A549 (cell line): ENCODE measurements at regions of chr3 and their contacts with region 1.

Region 1: GRCh38 chr3:101849051-101849720 is at the start of gene NFKBIZ:
- DNase-seq: peak; percentile 91 to 92
- ATAC-seq: peak; percentile 90 to 92
- H3K4me3 ChIP-seq: peak within 1 kb of the TSS; percentile 84
- H3K27ac ChIP-seq: peak within 1 kb of the TSS; percentile 96 to 98
- H3K4me1 ChIP-seq: peaks cover 40% of the 10 kb centered on the region
- CTCF ChIP-seq: no peak
- EP300 ChIP-seq: no peak; a peak in 1 of 5 replicates
- POLR2A ChIP-seq: peak; percentile 99
- RAD21 ChIP-seq: no peak
- polyA plus RNA-seq, gene NFKBIZ: 32.9 and 36.1 TPM in 2 replicates

Region 2: DNA sequence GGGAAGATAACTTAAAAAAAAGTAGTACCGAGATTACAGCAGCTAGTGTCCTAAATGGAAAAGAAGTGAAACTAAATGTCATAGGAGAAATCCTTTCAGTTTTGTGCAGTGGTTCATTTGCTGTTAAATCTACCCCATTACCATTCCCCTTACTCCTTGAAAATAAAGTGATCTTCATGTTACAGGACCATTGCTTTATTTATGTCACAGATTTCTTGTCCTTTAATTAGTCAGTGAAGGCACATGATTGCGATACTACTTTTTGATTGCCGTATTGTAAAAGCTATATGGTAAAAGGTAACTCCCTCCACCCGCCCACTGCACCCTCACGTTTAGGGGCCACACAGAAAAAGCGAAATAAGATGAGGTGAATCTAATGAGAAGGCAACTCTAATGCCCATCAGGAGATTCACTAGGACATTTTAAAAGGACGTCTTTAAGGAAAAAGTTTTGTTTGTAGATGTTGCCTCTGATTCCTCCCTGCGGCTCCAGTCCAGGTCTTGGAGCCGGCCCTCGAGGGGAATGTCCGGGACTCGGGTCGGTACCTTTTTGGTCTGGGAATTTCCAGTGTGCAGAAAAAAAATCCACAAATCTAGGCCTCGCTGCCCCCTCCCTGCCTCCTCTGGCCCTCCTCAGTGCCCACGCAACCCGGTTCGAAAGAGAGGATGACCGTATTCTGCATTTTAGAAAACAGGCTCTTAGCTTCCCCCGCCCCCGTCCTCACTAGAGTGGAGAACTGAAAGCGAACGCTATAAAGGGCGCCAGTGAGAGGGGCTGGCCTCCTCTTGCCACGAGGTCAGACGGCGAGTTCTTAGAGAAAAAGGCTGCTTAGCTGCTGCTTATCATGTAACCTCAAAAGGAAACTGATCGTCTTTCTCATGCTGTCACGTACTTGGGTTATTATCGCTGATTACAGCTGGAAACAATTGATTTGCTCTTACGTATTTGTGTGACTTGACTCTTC is 21.7 kb before region 1 on chr3:
- CTCF ChIA-PET with region 1: interaction called, 4 read pairs
- POLR2A ChIA-PET with region 1: interaction called, 37 read pairs
- DNase-seq: peak in 1 of 2 experiments; percentile 67
- ATAC-seq: peak; percentile 89 to 92
- H3K4me3 ChIP-seq: peak overlapping the region; percentile 61
- H3K27ac ChIP-seq: peak overlapping the region; percentile 88 to 94
- H3K4me1 ChIP-seq: peaks cover 40% of the 10 kb centered on the region
- CTCF ChIP-seq: no peak
- EP300 ChIP-seq: no peak
- POLR2A ChIP-seq: no peak
- RAD21 ChIP-seq: peak in 1 of 2 experiments; percentile 17; a peak in 2 of 5 replicates

Region 3: DNA sequence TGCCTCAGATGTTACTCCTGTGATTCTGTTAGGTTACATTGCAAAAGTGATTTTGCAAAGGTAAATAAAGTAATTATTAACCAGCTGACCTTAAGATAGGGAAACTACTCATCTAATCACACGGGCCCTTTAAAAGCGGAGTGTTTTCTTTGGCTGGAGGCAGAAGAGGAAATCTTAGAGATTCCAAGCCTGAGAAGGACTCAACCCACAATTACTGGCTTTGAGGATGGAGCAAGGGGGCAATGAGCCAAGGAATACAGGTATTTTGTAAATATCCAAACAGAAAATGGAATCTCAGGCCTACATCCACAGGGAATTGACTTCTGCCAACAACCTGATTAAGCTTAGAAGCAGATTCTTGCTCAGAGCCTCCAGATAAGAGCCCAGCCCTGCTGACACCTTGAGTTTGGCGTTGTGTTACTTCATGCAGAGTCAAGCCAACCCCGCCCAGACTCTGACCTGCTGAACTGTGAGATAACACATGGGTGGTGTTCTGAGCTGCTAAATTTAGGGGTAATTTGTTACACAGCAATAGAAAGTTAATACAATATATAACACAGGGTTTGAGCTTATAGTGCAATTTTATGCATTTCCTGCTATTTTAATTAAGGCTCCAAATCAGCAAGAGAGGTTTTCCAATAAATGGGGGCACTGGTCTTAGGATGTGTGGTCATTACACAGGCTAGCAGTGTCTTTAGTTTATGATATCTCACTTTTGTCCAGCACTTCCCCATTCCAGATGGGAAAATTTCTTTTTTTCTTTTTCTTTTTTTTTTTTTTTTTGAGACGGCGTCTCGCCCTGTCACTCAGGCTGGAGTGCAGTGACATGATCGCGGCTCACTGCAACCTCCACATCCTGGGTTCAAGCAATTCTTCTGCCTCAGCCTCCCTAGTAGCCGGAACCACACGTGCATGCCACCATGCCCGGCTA is 19.6 kb after region 1 on chr3:
- CTCF ChIA-PET with region 1: interaction called, 3 read pairs
- POLR2A ChIA-PET with region 1: interaction called, 14 read pairs
- DNase-seq: peak in 1 of 2 experiments; percentile 83
- ATAC-seq: peak; percentile 66 to 71
- H3K4me3 ChIP-seq: no peak overlapping the region
- H3K27ac ChIP-seq: peak overlapping the region; percentile 71 to 81
- H3K4me1 ChIP-seq: peaks cover 52% of the 10 kb centered on the region
- CTCF ChIP-seq: no peak
- EP300 ChIP-seq: peak; percentile 71 to 81; a peak in 3 of 5 replicates
- POLR2A ChIP-seq: no peak
- RAD21 ChIP-seq: peak in 1 of 2 experiments; percentile 48; a peak in 3 of 5 replicates

Region 4: DNA sequence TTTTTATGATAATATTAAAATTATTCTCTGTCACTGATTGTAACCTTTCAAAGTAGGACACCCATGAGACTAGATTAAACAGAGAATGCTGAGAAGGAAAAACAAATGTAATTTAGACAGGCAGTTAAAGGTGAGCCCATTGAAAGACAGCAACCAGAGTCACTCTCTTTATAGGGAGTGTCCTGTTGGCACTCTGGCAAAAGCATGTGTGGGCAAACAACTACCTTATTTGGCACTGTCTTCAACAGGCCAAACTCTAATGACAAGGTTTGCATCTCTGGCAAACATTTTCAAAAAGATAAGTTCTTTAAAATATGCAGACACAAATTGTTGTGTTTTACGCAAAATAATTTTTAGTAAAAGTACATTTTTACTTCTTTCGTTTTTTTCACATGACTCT is 29.9 kb after region 1 on chr3:
- CTCF ChIA-PET with region 1: no interaction called
- POLR2A ChIA-PET with region 1: no interaction called
- DNase-seq: no peak
- ATAC-seq: no peak
- H3K4me3 ChIP-seq: no peak overlapping the region
- H3K27ac ChIP-seq: no peak overlapping the region
- H3K4me1 ChIP-seq: no peaks in the 10 kb centered on the region
- CTCF ChIP-seq: no peak
- EP300 ChIP-seq: no peak
- POLR2A ChIP-seq: no peak
- RAD21 ChIP-seq: no peak

Region 5: DNA sequence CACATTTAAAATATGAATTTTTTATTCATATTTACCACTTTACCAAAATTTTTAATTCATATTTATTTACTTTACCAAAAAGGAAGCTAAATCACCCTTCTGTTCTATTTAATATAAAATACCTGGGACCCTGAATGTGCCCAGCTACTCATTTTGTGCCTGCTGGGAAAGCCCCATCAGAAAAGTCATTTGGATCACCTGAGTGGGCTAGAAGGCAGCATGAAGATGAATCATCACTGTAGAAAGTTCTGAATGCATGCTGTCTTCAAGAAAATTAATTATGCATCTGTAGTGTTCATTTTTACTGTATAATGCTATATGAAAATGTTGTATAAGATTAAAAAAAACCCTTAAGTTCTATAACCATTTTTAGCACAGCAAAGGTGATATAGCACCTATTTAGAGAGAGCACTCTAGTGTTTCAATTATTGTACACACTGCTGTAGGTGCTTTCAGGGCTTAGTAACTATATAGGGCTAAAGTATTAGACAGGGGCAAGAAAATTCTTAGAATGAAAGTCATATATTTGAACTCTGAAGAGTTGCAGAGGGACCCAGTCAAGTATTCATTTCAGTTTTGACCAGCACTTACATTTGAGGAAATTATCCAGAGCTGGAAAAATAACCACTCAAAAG is 175.2 kb after region 1 on chr3:
- CTCF ChIA-PET with region 1: no interaction called
- POLR2A ChIA-PET with region 1: no interaction called
- DNase-seq: no peak
- ATAC-seq: no peak
- H3K4me3 ChIP-seq: no peak overlapping the region
- H3K27ac ChIP-seq: no peak overlapping the region
- H3K4me1 ChIP-seq: no peaks in the 10 kb centered on the region
- CTCF ChIP-seq: no peak
- EP300 ChIP-seq: no peak
- POLR2A ChIP-seq: no peak
- RAD21 ChIP-seq: no peak

Region 6: DNA sequence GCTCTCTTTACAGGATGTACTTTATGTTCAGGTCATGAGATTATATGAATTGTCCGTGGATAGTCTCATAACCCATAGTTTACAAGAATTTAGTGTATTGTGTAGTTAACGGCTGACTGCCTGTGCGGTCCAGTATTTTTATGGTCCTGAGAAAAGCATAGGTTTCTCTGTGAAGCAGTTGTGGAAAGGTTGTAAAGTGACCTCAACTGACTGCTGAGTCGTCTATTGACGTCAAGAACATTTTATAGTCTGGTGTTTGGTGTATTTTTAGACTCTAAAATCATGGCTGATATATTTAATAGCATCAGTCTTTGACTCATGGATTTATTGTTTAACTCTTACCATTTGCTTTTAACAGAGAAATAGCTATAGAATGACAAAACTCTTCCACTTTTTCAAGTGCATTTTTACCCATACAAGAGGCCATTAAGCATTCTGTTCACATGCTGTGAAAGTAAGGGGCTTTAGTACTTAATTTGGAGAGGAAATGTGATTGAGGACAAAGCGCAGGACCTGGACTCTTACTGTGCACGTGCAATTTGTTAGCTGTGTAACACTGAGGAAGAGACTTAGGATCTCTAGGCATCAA is 240.8 kb after region 1 on chr3:
- CTCF ChIA-PET with region 1: no interaction called
- POLR2A ChIA-PET with region 1: interaction called, 12 read pairs
- DNase-seq: peak; percentile 20 to 91
- ATAC-seq: peak; percentile 89 to 92
- H3K4me3 ChIP-seq: no peak overlapping the region
- H3K27ac ChIP-seq: peak overlapping the region; percentile 82 to 86
- H3K4me1 ChIP-seq: peaks cover 32% of the 10 kb centered on the region
- CTCF ChIP-seq: no peak
- EP300 ChIP-seq: peak; percentile 97 to 98
- POLR2A ChIP-seq: no peak
- RAD21 ChIP-seq: peak in 1 of 2 experiments; percentile 76; a peak in 3 of 5 replicates

Region 7: GRCh38 chr3:102180291-102181039 is 331.3 kb after region 1 on chr3:
- CTCF ChIA-PET with region 1: no interaction called
- POLR2A ChIA-PET with region 1: interaction called, 27 read pairs
- DNase-seq: peak in 1 of 2 experiments; percentile 81
- ATAC-seq: peak; percentile 62 to 74; a peak in 5 of 6 replicates
- H3K4me3 ChIP-seq: peak overlapping the region; percentile 26
- H3K27ac ChIP-seq: peak overlapping the region; percentile 77 to 85
- H3K4me1 ChIP-seq: peaks cover 60% of the 10 kb centered on the region
- CTCF ChIP-seq: no peak
- EP300 ChIP-seq: peak in 1 of 2 experiments; percentile 55; a peak in 1 of 5 replicates
- POLR2A ChIP-seq: no peak
- RAD21 ChIP-seq: no peak